Calu3 (cell line): ENCODE measurements at regions of chr21 and their contacts with region 1.

Region 1: GRCh38 chr21:39518138-39518846 is 66.5 kb downstream of the SH3BGR start:
- DNase-seq: peak; percentile 61
- H3K4me3 Mint-ChIP-seq: no peak overlapping the region
- H3K27ac Mint-ChIP-seq: no peak overlapping the region
- H3K4me1 Mint-ChIP-seq: no peaks in the 10 kb centered on the region
- H3K27me3 Mint-ChIP-seq: no peaks in the 10 kb centered on the region
- CTCF ChIP-seq: peak; percentile 87

Region 2: DNA sequence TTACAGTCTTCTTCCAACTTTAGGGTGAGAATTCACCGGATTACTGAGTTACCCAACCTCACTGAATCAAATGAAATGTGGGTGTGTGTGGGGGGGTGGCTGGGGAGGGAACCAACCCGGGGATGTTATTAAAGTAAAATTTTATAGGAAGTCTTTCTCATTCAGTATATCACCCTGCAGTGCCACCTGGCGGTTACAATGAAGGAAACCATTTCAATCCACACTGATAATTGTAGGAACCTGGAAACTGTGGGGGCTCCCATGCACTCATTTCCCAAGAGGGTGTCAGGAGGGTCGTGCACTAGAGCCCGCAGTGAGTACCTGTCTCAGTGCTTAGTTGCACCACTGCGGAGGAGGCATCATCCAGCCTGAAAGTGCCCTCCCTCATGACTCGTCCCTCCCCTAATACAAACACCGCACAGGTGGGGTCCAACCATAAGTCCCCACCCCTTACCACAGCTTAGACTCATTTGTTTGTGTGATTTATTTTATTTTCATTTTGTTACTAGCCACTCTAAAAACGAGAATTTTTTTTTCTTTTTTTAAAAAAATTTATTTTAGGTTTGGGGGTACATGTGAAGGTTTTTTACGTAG is 197.6 kb after region 1 on chr21:
- CTCF ChIA-PET with region 1: interaction called, 7 read pairs
- intact Hi-C with region 1: loop called (anchors 1 kb)
- DNase-seq: peak; percentile 60
- H3K4me3 Mint-ChIP-seq: no peak overlapping the region
- H3K27ac Mint-ChIP-seq: no peak overlapping the region
- H3K4me1 Mint-ChIP-seq: peaks cover 13% of the 10 kb centered on the region
- H3K27me3 Mint-ChIP-seq: no peaks in the 10 kb centered on the region
- CTCF ChIP-seq: peak; percentile 51